Activated CD4-positive, alpha-beta memory T cell treated with anti-CD3 and anti-CD28 coated beads, Interleukin-2, amount 10 ng/mL, durations not matched to agents 7 days and 5 days (primary cell): ENCODE measurements at regions of chr9 and their contacts with region 1.

Region 1: DNA sequence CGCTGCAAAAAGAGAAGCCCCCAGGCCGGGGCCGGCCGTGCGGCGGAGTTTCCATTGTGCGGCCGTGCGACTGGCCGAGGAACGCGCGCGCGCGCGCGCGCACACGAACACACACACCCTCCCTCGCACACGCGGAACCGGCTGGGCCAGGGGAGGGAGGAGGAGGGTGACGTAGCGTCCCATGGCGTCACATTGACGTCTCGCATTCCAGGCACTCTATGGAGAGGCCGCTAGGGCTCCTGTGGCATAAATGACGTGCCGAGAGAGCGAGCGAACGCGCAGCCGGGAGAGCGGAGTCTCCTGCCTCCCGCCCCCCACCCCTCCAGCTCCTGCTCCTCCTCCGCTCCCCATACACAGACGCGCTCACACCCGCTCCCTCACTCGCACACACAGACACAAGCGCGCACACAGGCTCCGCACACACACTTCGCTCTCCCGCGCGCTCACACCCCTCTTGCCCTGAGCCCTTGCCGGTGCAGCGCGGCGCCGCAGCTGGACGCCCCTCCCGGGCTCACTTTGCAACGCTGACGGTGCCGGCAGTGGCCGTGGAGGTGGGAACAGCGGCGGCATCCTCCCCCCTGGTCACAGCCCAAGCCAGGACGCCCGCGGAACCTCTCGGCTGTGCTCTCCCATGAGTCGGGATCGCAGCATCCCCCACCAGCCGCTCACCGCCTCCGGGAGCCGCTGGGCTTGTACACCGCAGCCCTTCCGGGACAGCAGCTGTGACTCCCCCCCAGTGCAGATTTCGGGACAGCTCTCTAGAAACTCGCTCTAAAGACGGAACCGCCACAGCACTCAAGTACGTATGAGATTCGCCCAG is at the start of gene NR4A3:
- DNase-seq: peak; percentile 89
- H3K4me3 Mint-ChIP-seq: peak within 1 kb of the TSS; percentile 91
- H3K27ac Mint-ChIP-seq: peak within 1 kb of the TSS; percentile 70
- H3K4me1 Mint-ChIP-seq: peaks cover 68% of the 10 kb centered on the region
- H3K27me3 Mint-ChIP-seq: peaks cover 52% of the 10 kb centered on the region
- total RNA-seq, gene NR4A3: 3.0 to 3.2 TPM

Region 2: DNA sequence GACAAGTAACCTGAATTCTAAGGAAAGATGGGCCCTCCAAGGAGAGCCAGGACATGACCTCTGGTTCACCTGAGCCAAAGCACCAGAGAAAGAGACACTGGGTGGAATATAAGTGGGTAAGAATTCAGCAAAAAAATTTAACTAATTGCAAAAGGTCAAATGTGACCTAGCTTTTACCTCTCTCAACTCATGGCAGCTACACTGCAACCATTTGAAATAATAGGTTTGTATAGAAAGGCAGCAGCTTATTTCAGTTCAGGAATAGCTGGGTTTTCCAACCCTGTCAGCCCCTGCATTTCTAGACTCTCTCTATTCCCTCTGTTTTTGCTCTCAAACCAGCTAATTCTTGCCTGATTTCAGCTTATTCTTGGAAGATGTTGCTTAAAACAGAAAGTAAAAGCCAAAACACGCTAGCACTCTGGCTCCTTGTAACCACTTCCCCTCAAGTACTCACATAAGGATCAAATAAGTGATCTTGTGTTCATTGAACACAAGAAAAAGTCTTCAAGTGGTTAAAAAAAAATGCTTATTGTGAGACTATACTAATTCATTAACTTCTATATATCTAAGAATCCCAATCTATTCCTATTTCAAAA is 101.3 kb before region 1 on chr9:
- CTCF ChIA-PET with region 1: no interaction called
- POLR2A ChIA-PET with region 1: no interaction called
- DNase-seq: no peak
- H3K4me3 Mint-ChIP-seq: peak overlapping the region; percentile 58
- H3K27ac Mint-ChIP-seq: peak overlapping the region; percentile 73
- H3K4me1 Mint-ChIP-seq: peaks cover 31% of the 10 kb centered on the region
- H3K27me3 Mint-ChIP-seq: no peaks in the 10 kb centered on the region

Region 3: DNA sequence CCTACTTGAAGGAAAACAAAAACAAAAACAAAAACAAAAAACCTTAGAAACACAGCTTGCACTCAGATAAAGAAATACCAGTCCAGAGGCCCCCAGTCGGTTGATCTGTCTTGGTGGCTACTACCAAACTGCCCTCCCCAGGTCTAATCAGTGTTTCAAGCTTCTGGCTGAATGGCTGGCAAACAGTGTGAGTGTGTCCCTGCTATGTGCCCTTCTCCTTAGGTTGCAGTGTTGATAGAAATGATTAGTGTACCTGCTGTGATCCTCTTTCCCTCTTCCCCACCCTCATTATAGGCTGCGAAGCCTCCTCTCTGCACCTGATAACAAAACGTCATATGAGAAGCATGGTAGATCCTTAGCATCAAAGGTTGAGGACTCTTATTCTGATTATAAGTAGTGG is 12.7 kb after region 1 on chr9:
- CTCF ChIA-PET with region 1: interaction called, 13 read pairs
- POLR2A ChIA-PET with region 1: interaction called, 3 read pairs
- DNase-seq: no peak
- H3K4me3 Mint-ChIP-seq: no peak overlapping the region
- H3K27ac Mint-ChIP-seq: no peak overlapping the region
- H3K4me1 Mint-ChIP-seq: no peaks in the 10 kb centered on the region
- H3K27me3 Mint-ChIP-seq: peaks cover 11% of the 10 kb centered on the region

Region 4: GRCh38 chr9:99906403-99907207 is 84.8 kb after region 1 on chr9 and contains the start of gene STX17:
- CTCF ChIA-PET with region 1: interaction called, 7 read pairs
- POLR2A ChIA-PET with region 1: interaction called, 13 read pairs
- DNase-seq: peak; percentile 79
- H3K4me3 Mint-ChIP-seq: peak within 1 kb of the TSS; percentile 97
- H3K27ac Mint-ChIP-seq: peak within 1 kb of the TSS; percentile 96
- H3K4me1 Mint-ChIP-seq: peaks cover 31% of the 10 kb centered on the region
- H3K27me3 Mint-ChIP-seq: peaks cover 15% of the 10 kb centered on the region
- total RNA-seq, gene STX17: 35.8 to 37.3 TPM

Region 5: GRCh38 chr9:100011062-100011681 is 189.4 kb after region 1 on chr9:
- CTCF ChIA-PET with region 1: interaction called, 13 read pairs
- POLR2A ChIA-PET with region 1: interaction called, 3 read pairs
- DNase-seq: peak; percentile 35
- H3K4me3 Mint-ChIP-seq: no peak overlapping the region
- H3K27ac Mint-ChIP-seq: no peak overlapping the region
- H3K4me1 Mint-ChIP-seq: no peaks in the 10 kb centered on the region
- H3K27me3 Mint-ChIP-seq: no peaks in the 10 kb centered on the region